Activated B cell treated with CpG ODN at 0.5 μM for 24 hours (primary cell): ENCODE measurements at regions of chr12 and their contacts with region 1.

Region 1: GRCh38 chr12:56117778-56118687 is at the start of gene ZC3H10:
- DNase-seq: peak; percentile 89
- ATAC-seq: peak; percentile 76
- H3K4me3 Mint-ChIP-seq: peak within 1 kb of the TSS; percentile 100
- H3K27ac Mint-ChIP-seq: peak within 1 kb of the TSS; percentile 99
- H3K4me1 Mint-ChIP-seq: peaks cover 37% of the 10 kb centered on the region
- H3K27me3 Mint-ChIP-seq: no peaks in the 10 kb centered on the region
- CTCF ChIP-seq: no peak
- total RNA-seq, gene ZC3H10: 15.4 and 17.1 TPM in 2 replicates

Region 2: DNA sequence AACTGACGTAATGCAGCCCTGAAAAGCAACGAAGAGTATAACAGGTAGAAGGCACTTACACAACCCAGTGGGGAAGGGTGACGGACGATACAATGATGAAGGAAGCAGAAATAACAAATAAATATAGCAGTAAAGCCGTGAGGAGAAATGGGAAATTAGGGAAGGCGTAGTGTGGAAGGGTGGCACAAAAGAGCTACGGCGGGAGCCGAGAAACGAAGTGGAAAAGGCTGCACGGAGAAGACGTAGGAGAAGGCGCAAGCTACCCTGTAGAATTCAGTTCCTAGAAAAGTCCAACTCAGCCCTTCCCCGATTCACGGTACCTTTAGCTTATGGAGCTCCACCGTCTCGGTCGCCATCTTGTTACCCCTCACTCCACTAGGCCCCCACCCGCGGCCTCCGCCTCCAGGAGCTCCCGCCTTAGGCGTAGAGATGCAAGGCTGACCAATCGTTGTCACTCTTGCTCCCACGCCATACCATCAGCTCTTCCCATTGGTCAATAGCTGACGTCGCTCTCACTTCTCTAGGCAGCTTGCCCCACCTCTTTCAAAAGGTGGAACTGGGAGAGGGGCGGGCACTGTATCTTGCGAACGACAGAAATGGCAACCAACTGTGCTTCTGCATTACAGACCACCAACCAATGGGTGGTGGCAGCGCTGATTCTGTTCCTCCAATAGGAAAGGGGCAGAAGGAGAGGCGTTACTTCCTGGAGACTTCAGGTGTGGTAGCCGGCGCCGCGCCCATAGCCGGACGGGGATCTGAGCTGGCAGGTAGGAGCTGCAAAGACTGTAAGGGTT is 300.5 kb before region 1 on chr12 and contains the starts of genes ORMDL2 and SARNP:
- CTCF ChIA-PET with region 1: no interaction called
- POLR2A ChIA-PET with region 1: interaction called, 6 read pairs
- intact Hi-C with region 1: loop called (anchors 5 kb)
- DNase-seq: peak; percentile 80
- ATAC-seq: peak; percentile 94
- H3K4me3 Mint-ChIP-seq: no peak within 1 kb of the TSS
- H3K27ac Mint-ChIP-seq: no peak within 1 kb of the TSS
- H3K4me1 Mint-ChIP-seq: peaks cover 21% of the 10 kb centered on the region
- H3K27me3 Mint-ChIP-seq: no peaks in the 10 kb centered on the region
- CTCF ChIP-seq: no peak
- total RNA-seq, gene ORMDL2: 68.0 and 70.9 TPM in 2 replicates
- total RNA-seq, gene SARNP: 53.6 and 58.7 TPM in 2 replicates

Region 3: GRCh38 chr12:56020423-56021184 is 97.4 kb before region 1 on chr12 and contains the start of gene IKZF4:
- CTCF ChIA-PET with region 1: no interaction called
- POLR2A ChIA-PET with region 1: no interaction called
- intact Hi-C with region 1: no loop called
- DNase-seq: no peak
- ATAC-seq: peak; percentile 34
- H3K4me3 Mint-ChIP-seq: peak within 1 kb of the TSS; percentile 66
- H3K27ac Mint-ChIP-seq: no peak within 1 kb of the TSS
- H3K4me1 Mint-ChIP-seq: peaks cover 9% of the 10 kb centered on the region
- H3K27me3 Mint-ChIP-seq: no peaks in the 10 kb centered on the region
- CTCF ChIP-seq: no peak
- total RNA-seq, gene IKZF4: 4.1 and 6.4 TPM in 2 replicates

Region 4: GRCh38 chr12:56041552-56042429 is 76.2 kb before region 1 on chr12 and contains the start of gene RPS26:
- CTCF ChIA-PET with region 1: interaction called, 10 read pairs
- POLR2A ChIA-PET with region 1: interaction called, 7 read pairs
- intact Hi-C with region 1: loop called (anchors 1 kb)
- DNase-seq: peak; percentile 77
- ATAC-seq: peak; percentile 93
- H3K4me3 Mint-ChIP-seq: peak within 1 kb of the TSS; percentile 99
- H3K27ac Mint-ChIP-seq: peak within 1 kb of the TSS; percentile 98
- H3K4me1 Mint-ChIP-seq: peaks cover 33% of the 10 kb centered on the region
- H3K27me3 Mint-ChIP-seq: no peaks in the 10 kb centered on the region
- CTCF ChIP-seq: no peak
- total RNA-seq, gene RPS26: 23.9 and 28.1 TPM in 2 replicates

Region 5: GRCh38 chr12:56189176-56189917 is 71.3 kb after region 1 on chr12 and contains the start of gene SMARCC2:
- CTCF ChIA-PET with region 1: interaction called, 80 read pairs
- POLR2A ChIA-PET with region 1: interaction called, 116 read pairs
- intact Hi-C with region 1: loop called (anchors 1 kb)
- DNase-seq: peak; percentile 82
- ATAC-seq: peak; percentile 81
- H3K4me3 Mint-ChIP-seq: peak within 1 kb of the TSS; percentile 95
- H3K27ac Mint-ChIP-seq: peak within 1 kb of the TSS; percentile 96
- H3K4me1 Mint-ChIP-seq: peaks cover 43% of the 10 kb centered on the region
- H3K27me3 Mint-ChIP-seq: no peaks in the 10 kb centered on the region
- CTCF ChIP-seq: no peak
- total RNA-seq, gene SMARCC2: 109 and 136 TPM in 2 replicates

Region 6: GRCh38 chr12:56299853-56300643 is 182.0 kb after region 1 on chr12 and contains the start of gene CS:
- CTCF ChIA-PET with region 1: no interaction called
- POLR2A ChIA-PET with region 1: interaction called, 12 read pairs
- intact Hi-C with region 1: loop called (anchors 1 kb)
- DNase-seq: peak; percentile 97
- ATAC-seq: peak; percentile 96
- H3K4me3 Mint-ChIP-seq: peak within 1 kb of the TSS; percentile 96
- H3K27ac Mint-ChIP-seq: peak within 1 kb of the TSS; percentile 97
- H3K4me1 Mint-ChIP-seq: peaks cover 59% of the 10 kb centered on the region
- H3K27me3 Mint-ChIP-seq: no peaks in the 10 kb centered on the region
- CTCF ChIP-seq: no peak
- total RNA-seq, gene CS: 229 and 233 TPM in 2 replicates

Region 7: GRCh38 chr12:56468216-56469006 is 350.4 kb after region 1 on chr12 and contains the start of gene SPRYD4:
- CTCF ChIA-PET with region 1: interaction called, 6 read pairs
- POLR2A ChIA-PET with region 1: interaction called, 15 read pairs
- intact Hi-C with region 1: loop called (anchors 1 kb)
- DNase-seq: peak; percentile 92
- ATAC-seq: peak; percentile 90
- H3K4me3 Mint-ChIP-seq: peak within 1 kb of the TSS; percentile 94
- H3K27ac Mint-ChIP-seq: peak within 1 kb of the TSS; percentile 94
- H3K4me1 Mint-ChIP-seq: peaks cover 36% of the 10 kb centered on the region
- H3K27me3 Mint-ChIP-seq: no peaks in the 10 kb centered on the region
- CTCF ChIP-seq: no peak
- total RNA-seq, gene SPRYD4: 5.8 and 7.5 TPM in 2 replicates

Region 8: DNA sequence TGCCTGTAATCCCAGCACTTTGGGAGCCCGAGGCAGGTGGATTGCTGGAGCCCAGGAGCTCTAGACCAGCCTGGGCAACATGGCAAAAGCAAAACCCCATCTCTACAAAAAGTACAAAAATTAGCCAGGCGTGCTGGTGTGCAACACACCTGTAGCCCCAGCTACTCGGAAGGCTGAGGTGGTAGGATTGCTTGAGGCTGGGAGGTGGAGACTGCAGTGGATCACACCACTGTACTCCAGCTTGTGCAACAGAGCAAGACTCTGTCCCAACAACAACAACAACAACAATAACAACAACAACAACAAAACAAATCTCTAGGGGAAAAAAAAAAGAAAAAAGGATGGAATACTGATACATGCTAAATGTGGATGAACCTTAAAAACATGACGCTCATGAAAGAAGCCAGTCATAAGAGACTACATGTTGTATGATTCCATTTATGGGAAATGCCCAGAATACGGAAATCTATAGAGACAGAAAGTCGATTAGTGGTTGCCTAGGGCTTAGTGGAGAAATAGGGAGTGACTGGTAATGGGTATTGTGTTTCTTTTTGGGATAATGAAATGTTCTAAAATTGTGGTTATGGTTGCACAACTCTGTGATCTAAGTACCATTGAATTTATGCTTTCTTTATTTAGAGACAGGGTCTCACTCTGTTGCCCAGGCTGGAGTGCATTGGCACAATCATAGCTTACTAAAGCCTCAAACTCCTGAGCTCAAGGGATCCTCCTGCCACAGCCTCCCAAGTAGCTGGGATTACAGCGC is 411.4 kb after region 1 on chr12:
- CTCF ChIA-PET with region 1: no interaction called
- POLR2A ChIA-PET with region 1: no interaction called
- intact Hi-C with region 1: no loop called
- DNase-seq: no peak
- ATAC-seq: no peak
- H3K4me3 Mint-ChIP-seq: no peak overlapping the region
- H3K27ac Mint-ChIP-seq: no peak overlapping the region
- H3K4me1 Mint-ChIP-seq: no peaks in the 10 kb centered on the region
- H3K27me3 Mint-ChIP-seq: no peaks in the 10 kb centered on the region
- CTCF ChIP-seq: no peak